ENCODE measurements at regions of chr16 and their contacts with region 1.

Region 1: DNA sequence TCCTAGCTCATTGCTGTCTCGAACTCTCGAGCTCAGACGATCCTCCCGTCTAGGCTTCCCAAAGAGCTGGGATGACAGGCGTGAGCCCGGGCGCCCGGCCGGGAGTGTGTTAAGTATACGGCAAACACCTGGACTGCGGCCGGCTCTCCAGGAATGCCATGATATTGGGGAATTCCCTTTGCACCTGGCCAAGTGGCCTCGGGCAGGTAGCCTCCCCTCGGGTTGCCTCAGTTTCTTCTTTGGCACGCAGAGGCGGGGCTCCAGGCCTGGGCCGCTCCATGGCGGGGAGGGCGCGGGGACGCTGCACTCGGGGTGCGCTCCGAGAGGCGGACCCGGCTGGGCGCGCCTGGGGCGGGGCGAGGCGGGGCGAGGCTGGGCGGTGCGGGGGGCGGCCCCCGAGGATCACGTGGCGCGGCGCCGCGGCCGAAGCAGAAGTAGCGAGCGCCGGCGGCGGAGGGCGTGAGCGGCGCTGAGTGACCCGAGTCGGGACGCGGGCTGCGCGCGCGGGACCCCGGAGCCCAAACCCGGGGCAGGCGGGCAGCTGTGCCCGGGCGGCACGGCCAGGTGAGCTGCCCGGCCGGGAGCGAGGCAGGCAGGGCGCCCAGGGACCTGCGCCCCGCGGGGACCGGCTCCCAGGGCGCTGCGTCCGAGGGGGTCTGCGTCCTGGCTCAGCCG is at the start of gene PLCG2:
- DNase-seq: no peak
- ATAC-seq: peak; percentile 83
- H3K4me3 ChIP-seq: peak within 1 kb of the TSS; percentile 99
- H3K27ac ChIP-seq: peak within 1 kb of the TSS; percentile 86
- H3K4me1 ChIP-seq: peaks cover 28% of the 10 kb centered on the region
- H3K27me3 ChIP-seq: no peaks in the 10 kb centered on the region
- CTCF ChIP-seq: no peak
- EP300 ChIP-seq: no peak
- POLR2A ChIP-seq: peak; percentile 83
- RAD21 ChIP-seq: no peak
- polyA plus RNA-seq, gene PLCG2: 47.6 to 53.9 TPM

Region 2: DNA sequence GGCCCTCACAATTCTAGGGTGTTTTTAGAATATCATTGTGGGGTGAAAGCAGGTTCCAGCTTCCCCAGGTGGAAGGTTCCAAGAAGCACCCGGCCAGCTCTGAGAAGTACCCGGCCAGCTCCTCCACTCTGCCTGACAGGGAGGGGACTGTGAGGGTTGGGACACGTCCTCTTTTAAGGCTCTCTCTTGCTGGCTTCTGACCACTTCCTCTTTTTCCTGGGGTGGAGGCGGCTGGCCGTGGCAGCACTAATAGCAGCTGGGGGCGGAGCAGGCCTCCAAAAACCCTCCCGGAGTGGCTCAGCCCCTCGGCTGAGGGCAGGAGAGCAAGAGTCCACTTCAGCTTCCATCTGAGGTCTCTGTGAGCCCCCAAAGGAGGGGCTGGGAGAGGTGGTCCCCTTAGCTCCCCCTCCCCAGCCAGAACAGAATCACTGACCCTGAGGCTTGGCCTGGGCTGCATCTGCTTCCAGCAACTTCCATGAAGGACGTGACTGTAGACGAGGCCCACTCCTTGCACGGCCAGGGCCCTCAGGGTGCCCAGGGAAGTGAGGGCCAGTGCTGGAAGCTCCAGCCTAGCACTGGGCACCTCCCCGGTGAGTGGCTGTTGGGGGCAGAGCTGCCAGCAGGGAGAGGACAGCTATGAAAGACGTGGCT is 26.6 kb before region 1 on chr16:
- CTCF ChIA-PET with region 1: interaction called, 16 read pairs
- POLR2A ChIA-PET with region 1: interaction called, 22 read pairs
- RAD21 ChIA-PET with region 1: interaction called, 25 read pairs
- SMC1A ChIA-PET with region 1: interaction called, 65 read pairs
- in situ Hi-C with region 1: no loop called
- intact Hi-C with region 1: loop called (anchors 5 kb)
- DNase-seq: peak; percentile 72
- ATAC-seq: peak; percentile 97
- H3K4me3 ChIP-seq: peak overlapping the region; percentile 54; the same call in 1 of the 2 replicates
- H3K27ac ChIP-seq: peak overlapping the region; percentile 68
- H3K4me1 ChIP-seq: peaks cover 46% of the 10 kb centered on the region
- H3K27me3 ChIP-seq: no peaks in the 10 kb centered on the region
- CTCF ChIP-seq: no peak
- EP300 ChIP-seq: peak in 1 of 2 experiments; percentile 86; a peak in 3 of 4 replicates
- POLR2A ChIP-seq: peak; percentile 86
- RAD21 ChIP-seq: no peak

Region 3: DNA sequence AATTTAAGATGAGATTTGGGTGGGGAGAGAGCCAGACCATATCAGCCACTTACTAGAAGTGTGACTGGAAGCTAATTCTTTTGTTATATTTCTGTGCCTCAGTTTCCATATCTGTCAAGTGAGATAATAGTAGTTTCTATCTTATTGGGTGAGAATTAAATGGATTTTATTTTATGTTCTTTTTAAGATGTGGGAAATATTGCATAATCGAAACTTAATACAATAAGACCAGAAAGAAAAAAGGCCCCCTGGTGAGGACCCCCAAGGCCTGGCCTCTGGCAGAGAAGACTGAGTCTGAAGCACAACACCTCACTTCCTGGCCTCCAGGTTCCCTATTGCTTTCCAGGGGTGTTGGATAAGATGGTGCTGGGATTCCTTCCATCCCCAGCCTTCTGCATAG is 13.8 kb after region 1 on chr16:
- CTCF ChIA-PET with region 1: interaction called, 16 read pairs
- POLR2A ChIA-PET with region 1: interaction called, 22 read pairs
- RAD21 ChIA-PET with region 1: interaction called, 74 read pairs
- SMC1A ChIA-PET with region 1: interaction called, 15 read pairs
- in situ Hi-C with region 1: no loop called
- intact Hi-C with region 1: no loop called
- DNase-seq: no peak
- ATAC-seq: no peak
- H3K4me3 ChIP-seq: no peak overlapping the region
- H3K27ac ChIP-seq: no peak overlapping the region
- H3K4me1 ChIP-seq: peaks cover 42% of the 10 kb centered on the region
- H3K27me3 ChIP-seq: no peaks in the 10 kb centered on the region
- CTCF ChIP-seq: no peak
- EP300 ChIP-seq: no peak
- POLR2A ChIP-seq: no peak
- RAD21 ChIP-seq: no peak

Region 4: GRCh38 chr16:81808933-81809496 is 30.0 kb after region 1 on chr16:
- CTCF ChIA-PET with region 1: interaction called, 9 read pairs
- POLR2A ChIA-PET with region 1: interaction called, 16 read pairs
- RAD21 ChIA-PET with region 1: interaction called, 28 read pairs
- SMC1A ChIA-PET with region 1: interaction called, 16 read pairs
- in situ Hi-C with region 1: no loop called
- intact Hi-C with region 1: loop called (anchors 2 kb)
- DNase-seq: peak; percentile 99
- ATAC-seq: peak; percentile 75
- H3K4me3 ChIP-seq: peak overlapping the region; percentile 48; the same call in 1 of the 2 replicates
- H3K27ac ChIP-seq: peak overlapping the region; percentile 99
- H3K4me1 ChIP-seq: peaks cover 78% of the 10 kb centered on the region
- H3K27me3 ChIP-seq: no peaks in the 10 kb centered on the region
- CTCF ChIP-seq: no peak
- EP300 ChIP-seq: peak; percentile 98
- POLR2A ChIP-seq: peak; percentile 61
- RAD21 ChIP-seq: peak; percentile 9; the same call in 1 of the 2 replicates

Region 5: GRCh38 chr16:81823111-81823510 is 44.1 kb after region 1 on chr16:
- CTCF ChIA-PET with region 1: interaction called, 13 read pairs
- POLR2A ChIA-PET with region 1: interaction called, 46 read pairs
- RAD21 ChIA-PET with region 1: interaction called, 67 read pairs
- SMC1A ChIA-PET with region 1: interaction called, 58 read pairs
- in situ Hi-C with region 1: no loop called
- intact Hi-C with region 1: no loop called
- DNase-seq: no peak
- ATAC-seq: peak; percentile 72
- H3K4me3 ChIP-seq: peak overlapping the region; percentile 71
- H3K27ac ChIP-seq: peak overlapping the region; percentile 98
- H3K4me1 ChIP-seq: peaks cover 86% of the 10 kb centered on the region
- H3K27me3 ChIP-seq: no peaks in the 10 kb centered on the region
- CTCF ChIP-seq: peak; percentile 4 to 42 (median 11); a peak in 2 of 6 replicates
- EP300 ChIP-seq: peak; percentile 23 to 60; a peak in 3 of 4 replicates
- POLR2A ChIP-seq: peak; percentile 80
- RAD21 ChIP-seq: peak; percentile 53

Region 6: GRCh38 chr16:81885976-81886586 is 107.1 kb after region 1 on chr16:
- CTCF ChIA-PET with region 1: interaction called, 11 read pairs
- POLR2A ChIA-PET with region 1: interaction called, 3 read pairs
- RAD21 ChIA-PET with region 1: interaction called, 3 read pairs
- SMC1A ChIA-PET with region 1: interaction called, 3 read pairs
- in situ Hi-C with region 1: no loop called
- intact Hi-C with region 1: no loop called
- DNase-seq: no peak
- ATAC-seq: peak; percentile 91
- H3K4me3 ChIP-seq: no peak overlapping the region
- H3K27ac ChIP-seq: no peak overlapping the region
- H3K4me1 ChIP-seq: no peaks in the 10 kb centered on the region
- H3K27me3 ChIP-seq: no peaks in the 10 kb centered on the region
- CTCF ChIP-seq: peak; percentile 68 to 71 (median 68); a peak in 5 of 6 replicates
- EP300 ChIP-seq: no peak
- POLR2A ChIP-seq: no peak
- RAD21 ChIP-seq: peak; percentile 54

Measured in GM12878 (cell line).